ENCODE measurements at regions of chr3 and their contacts with region 1.

Region 1: GRCh38 chr3:177197041-177197727 is at the start of gene TBL1XR1:
- DNase-seq: peak; percentile 93
- H3K4me3 ChIP-seq: peak within 1 kb of the TSS; percentile 68
- H3K27ac ChIP-seq: peak within 1 kb of the TSS; percentile 97
- H3K4me1 ChIP-seq: peaks cover 15% of the 10 kb centered on the region
- H3K27me3 ChIP-seq: no peaks in the 10 kb centered on the region
- CTCF ChIP-seq: no peak
- total RNA-seq, gene TBL1XR1: 202 to 226 TPM

Region 2: GRCh38 chr3:177050501-177051237 is 146.5 kb before region 1 on chr3:
- intact Hi-C with region 1: loop called (anchors 2 kb)
- DNase-seq: no peak
- H3K4me3 ChIP-seq: no peak overlapping the region
- H3K27ac ChIP-seq: no peak overlapping the region
- H3K4me1 ChIP-seq: no peaks in the 10 kb centered on the region
- H3K27me3 ChIP-seq: no peaks in the 10 kb centered on the region
- CTCF ChIP-seq: peak; percentile 27

Region 3: DNA sequence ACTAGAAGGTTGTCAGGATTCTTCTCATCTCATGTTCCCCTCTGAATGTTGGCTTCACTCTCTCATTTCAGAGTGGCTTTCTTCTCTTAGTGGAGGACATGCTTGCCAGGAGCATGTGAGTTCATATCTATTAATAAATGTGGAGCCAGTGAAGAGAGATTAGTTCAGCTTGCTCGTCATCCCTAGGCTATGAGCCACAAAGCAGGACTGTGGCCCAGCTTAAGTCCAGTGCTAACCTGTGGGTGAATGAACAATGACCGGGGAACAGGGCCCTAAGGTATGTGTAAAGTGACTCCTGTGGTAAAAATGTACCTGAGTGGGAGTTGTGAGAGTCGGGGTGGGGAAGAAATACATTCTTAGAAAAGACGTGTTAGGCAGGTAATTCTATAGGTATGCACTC is 97.0 kb after region 1 on chr3:
- intact Hi-C with region 1: loop called (anchors 5 kb)
- DNase-seq: no peak
- H3K4me3 ChIP-seq: no peak overlapping the region
- H3K27ac ChIP-seq: peak overlapping the region; percentile 92
- H3K4me1 ChIP-seq: no peaks in the 10 kb centered on the region
- H3K27me3 ChIP-seq: no peaks in the 10 kb centered on the region
- CTCF ChIP-seq: no peak

Region 4: GRCh38 chr3:177359593-177360357 is 162.6 kb after region 1 on chr3:
- intact Hi-C with region 1: loop called (anchors 2 kb)
- DNase-seq: peak; percentile 95
- H3K4me3 ChIP-seq: peak overlapping the region; percentile 21
- H3K27ac ChIP-seq: peak overlapping the region; percentile 96
- H3K4me1 ChIP-seq: peaks cover 18% of the 10 kb centered on the region
- H3K27me3 ChIP-seq: no peaks in the 10 kb centered on the region
- CTCF ChIP-seq: no peak

Region 5: DNA sequence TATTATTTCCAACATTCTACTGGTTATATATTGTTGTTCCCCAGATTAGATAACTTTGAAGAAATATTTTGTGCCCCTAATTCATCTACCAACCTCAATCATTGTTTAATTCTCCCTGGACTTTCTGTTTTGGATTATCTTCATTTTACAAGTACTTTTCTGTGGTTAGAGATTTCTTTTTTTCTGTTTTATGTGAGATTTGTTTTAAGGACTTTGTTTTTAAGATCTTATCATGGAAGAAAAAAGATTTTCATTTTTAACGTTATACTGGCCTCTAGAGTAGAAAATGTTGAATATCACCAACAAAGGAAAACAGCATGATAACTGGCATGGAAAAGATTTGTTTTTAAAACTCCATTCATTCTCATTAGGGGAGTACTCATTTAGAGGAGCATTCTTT is 1128.1 kb after region 1 on chr3:
- intact Hi-C with region 1: loop called (anchors 10 kb)
- DNase-seq: no peak
- H3K4me3 ChIP-seq: no peak overlapping the region
- H3K27ac ChIP-seq: no peak overlapping the region
- H3K4me1 ChIP-seq: no peaks in the 10 kb centered on the region
- H3K27me3 ChIP-seq: no peaks in the 10 kb centered on the region
- CTCF ChIP-seq: peak; percentile 29

Measured in colonic mucosa (tissue), 4 donors.